ENCODE measurements at regions of chr1 and their contacts with region 1.

Region 1: DNA sequence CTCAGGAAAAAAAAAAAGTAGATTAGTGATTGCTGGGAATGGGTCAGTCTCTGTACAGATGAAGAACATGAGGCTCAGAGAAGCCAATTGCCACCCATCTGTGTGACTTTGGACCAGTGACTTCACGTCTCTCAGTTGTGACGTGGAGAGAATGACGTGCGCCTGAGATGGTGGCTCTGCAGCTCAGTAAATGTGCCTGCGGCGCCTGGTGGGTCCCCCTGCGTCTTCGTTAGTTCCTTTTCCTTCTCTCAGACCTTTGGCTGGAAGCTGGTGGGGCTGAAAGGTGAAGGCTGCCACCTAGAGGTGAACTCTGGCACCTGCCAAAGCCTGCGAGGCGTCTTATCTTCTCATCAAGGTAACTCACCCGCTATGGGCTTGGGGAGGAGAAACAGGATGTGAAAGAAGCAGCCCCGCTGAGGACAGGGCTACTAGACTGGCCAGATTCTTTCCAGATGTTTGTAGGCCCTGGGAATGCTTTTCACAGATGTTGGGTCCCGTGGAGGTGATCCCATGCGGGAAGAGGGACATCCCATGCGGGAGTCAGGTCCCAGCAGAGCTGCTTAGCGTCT is 8.7 kb upstream of the E2F2 start:
- DNase-seq: peak; percentile 74 to 97 (median 86)

Region 2: DNA sequence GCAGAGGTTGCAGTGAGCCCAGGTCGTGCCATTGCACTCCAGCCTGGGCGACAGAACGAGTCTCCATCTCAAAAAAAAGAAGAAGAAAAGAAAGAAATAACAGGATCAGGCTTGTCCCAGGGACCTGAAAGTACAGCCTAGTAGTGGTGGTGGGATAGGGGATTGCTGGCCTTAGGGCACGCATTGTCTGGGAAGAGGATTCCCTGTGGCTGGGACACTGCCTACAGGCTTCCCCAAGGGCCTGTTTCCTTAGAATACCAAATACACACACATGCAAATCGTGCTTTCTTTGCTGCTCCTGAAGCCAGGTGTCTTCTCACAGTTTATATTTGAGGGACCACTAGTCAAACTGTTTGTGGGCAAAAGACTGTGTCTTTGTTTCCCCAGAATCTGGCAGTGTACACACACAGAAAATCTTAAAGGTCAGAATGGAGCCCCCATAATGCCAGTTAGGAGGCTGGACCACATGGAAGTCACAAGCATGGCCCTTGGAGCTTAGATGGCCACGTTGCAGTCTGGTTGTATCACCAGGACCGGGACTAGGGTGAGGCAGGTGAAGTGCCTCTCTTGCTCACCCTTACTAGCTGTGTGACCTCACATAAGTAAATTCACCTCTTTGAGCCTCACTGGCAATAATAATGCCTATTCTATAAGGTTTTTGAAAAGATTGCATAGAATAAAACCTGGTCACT is 43.1 kb before region 1 on chr1:
- intact Hi-C with region 1: loop called (anchors 1 kb)
- DNase-seq: no peak

Region 3: DNA sequence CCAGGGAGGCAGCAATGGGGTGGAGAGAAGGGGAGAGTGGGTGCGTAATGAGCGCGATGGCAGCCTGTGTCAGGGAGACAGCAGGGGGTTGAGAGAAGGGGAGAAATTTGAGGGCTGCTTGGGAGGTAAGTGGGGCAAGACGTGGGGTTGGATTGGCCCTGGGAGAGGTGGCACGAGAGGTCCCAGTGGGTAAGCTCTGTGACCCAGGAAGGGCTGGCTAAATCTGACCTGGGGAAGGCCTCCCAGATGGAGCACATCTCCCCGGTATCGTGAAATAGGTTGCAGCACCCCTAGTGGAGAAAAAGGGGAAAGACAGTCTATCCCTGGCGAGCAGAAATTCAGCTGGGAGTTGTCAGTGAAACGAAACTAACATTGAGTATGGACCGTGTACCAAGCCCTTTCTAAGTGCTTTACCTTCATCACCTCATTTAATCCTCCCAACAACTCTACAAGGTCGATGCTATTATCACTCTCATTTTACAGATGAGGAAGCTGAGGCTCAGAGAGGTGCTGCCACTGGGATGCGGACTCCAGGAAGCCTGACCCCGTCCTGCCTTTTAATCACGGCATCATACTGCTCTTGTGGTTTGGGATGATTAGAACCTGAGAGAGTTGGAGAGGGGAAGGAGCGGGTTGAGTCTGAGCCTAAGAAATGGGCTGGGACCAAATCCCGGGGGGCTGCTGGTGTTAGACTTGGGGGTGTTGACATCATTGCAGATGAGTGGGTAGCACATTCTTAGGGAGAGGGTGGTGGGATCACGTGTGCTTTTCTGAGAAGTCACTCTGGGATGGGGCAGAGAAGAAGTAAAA is 95.3 kb after region 1 on chr1:
- intact Hi-C with region 1: loop called (anchors 1 kb)
- DNase-seq: peak in 6 of 10 donors; percentile 11 to 88 (median 46)

Measured in posterior cingulate gyrus (tissue), 11 donors.